MCF 10A (cell line): ENCODE measurements at regions of chr12 and their contacts with region 1.

Region 1: DNA sequence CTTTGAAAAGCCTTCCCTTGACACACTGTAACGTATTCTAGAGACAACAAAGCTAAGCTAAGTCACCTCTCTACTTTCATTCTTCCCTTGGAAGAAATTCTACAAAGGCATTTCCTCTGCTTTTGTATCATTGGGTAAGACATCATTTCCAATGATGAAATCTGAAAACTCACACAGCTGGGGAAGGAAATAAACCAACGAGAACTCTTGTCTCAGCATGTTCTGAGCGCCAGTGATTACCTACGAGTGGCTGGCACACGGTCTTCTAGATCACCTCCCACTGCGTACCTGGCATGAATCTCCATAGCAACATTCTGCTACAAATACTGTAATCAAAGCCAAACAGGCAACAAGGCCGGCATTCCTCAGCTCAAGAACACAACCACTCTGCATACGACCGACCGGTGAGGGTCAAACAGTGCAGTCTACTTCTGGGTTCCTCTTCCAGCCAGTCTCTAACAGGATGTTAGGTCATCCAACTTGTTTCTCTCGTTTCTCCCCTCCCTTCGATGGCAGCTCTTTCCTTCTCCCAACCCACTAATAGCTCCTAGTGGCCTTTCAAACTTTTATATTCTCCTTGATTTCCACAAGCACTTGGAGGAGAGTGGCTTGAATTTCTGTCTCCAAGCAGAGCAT is 7.6 kb downstream of the VPS37B start:
- DNase-seq: peak; percentile 98
- H3K4me3 Mint-ChIP-seq: peak overlapping the region; percentile 56
- H3K27ac Mint-ChIP-seq: peak overlapping the region; percentile 99
- H3K4me1 Mint-ChIP-seq: peaks cover 49% of the 10 kb centered on the region
- H3K27me3 Mint-ChIP-seq: no peaks in the 10 kb centered on the region
- CTCF ChIP-seq: no peak

Region 2: GRCh38 chr12:122834104-122834920 is 54.0 kb before region 1 on chr12:
- CTCF ChIA-PET with region 1: no interaction called
- POLR2A ChIA-PET with region 1: interaction called, 11 read pairs
- intact Hi-C with region 1: no loop called
- DNase-seq: peak; percentile 56
- H3K4me3 Mint-ChIP-seq: peak overlapping the region; percentile 75
- H3K27ac Mint-ChIP-seq: no peak overlapping the region
- H3K4me1 Mint-ChIP-seq: peaks cover 32% of the 10 kb centered on the region
- H3K27me3 Mint-ChIP-seq: no peaks in the 10 kb centered on the region
- CTCF ChIP-seq: no peak

Region 3: DNA sequence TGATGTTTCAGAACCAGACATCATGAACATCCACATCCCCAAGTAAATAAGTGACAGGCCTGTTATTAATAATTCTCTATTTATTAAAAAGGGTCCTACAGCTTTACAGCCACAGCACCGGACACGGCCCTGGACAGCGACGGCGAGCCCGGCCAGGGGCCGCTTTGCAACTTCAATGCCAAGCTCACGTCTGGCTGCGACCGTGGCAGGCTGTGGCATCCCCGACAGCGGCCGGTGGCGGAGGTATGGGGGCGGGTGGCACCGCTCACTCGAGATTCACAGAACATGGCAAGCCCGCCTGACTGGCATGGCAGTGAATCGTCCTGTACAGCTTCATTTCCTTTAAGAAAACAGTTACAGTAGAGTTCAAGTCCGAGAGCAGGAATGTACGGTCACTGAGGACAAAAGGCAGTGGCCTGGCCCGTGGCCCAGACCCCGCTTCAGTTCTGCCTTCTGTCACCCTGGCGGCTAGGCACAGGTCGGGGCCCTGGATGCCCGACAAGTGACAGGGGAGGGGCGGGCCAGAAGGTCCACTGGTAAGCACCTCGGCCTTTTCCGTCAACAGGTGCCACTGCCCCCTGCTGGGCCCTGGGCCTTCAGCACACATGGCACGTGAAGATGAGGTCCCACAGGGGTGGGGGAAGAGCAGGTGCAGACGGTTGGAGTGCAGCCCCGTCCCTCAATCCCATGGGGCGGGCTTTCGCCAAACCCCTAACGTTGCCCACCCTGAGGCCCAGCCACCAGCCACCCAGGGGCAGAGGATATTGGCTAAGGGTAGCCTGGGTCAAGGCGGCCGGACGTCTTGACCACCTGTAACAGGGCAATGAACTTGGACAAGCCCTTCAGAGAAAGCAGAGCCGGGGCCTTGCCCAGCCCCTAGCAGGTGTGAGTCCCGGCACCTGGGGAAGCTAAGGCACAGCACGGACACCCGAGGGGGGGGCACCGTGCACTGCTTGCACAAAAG is 22.8 kb before region 1 on chr12:
- CTCF ChIA-PET with region 1: interaction called, 16 read pairs
- POLR2A ChIA-PET with region 1: interaction called, 53 read pairs
- intact Hi-C with region 1: no loop called
- DNase-seq: no peak
- H3K4me3 Mint-ChIP-seq: no peak overlapping the region
- H3K27ac Mint-ChIP-seq: no peak overlapping the region
- H3K4me1 Mint-ChIP-seq: peaks cover 18% of the 10 kb centered on the region
- H3K27me3 Mint-ChIP-seq: no peaks in the 10 kb centered on the region
- CTCF ChIP-seq: peak; percentile 38

Region 4: DNA sequence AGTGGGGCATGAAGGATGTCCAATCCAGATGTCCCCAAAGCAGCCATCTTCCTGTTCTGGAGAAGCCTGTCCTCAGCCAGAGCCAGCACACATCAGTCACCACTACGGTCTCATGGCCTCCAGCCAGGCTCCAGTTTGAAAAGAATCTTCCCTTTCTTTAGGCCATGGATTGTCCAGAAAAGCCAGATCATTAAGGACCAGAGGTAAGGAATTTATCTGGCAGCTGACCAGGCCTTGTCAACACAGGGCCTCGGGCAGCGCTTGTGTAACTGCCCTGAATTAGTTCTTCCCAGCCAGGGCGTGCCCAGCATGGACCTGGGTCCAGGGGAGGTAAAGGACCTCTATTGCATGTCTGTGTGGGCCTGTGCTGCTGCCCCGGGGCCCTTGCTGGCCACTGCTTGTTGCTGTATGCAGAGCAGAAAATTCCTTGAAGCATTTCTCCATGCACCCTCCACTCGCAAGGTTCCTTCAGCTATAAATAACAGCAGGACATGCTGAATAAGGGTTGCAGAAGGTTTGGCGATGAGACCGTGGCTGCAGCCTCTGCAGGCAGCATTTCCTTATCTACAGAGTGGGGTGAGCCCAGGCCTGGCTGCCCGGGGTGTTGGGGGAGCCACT is 29.3 kb after region 1 on chr12:
- CTCF ChIA-PET with region 1: no interaction called
- POLR2A ChIA-PET with region 1: interaction called, 28 read pairs
- intact Hi-C with region 1: loop called (anchors 2 kb)
- DNase-seq: peak; percentile 96
- H3K4me3 Mint-ChIP-seq: no peak overlapping the region
- H3K27ac Mint-ChIP-seq: no peak overlapping the region
- H3K4me1 Mint-ChIP-seq: peaks cover 26% of the 10 kb centered on the region
- H3K27me3 Mint-ChIP-seq: no peaks in the 10 kb centered on the region
- CTCF ChIP-seq: no peak

Region 5: DNA sequence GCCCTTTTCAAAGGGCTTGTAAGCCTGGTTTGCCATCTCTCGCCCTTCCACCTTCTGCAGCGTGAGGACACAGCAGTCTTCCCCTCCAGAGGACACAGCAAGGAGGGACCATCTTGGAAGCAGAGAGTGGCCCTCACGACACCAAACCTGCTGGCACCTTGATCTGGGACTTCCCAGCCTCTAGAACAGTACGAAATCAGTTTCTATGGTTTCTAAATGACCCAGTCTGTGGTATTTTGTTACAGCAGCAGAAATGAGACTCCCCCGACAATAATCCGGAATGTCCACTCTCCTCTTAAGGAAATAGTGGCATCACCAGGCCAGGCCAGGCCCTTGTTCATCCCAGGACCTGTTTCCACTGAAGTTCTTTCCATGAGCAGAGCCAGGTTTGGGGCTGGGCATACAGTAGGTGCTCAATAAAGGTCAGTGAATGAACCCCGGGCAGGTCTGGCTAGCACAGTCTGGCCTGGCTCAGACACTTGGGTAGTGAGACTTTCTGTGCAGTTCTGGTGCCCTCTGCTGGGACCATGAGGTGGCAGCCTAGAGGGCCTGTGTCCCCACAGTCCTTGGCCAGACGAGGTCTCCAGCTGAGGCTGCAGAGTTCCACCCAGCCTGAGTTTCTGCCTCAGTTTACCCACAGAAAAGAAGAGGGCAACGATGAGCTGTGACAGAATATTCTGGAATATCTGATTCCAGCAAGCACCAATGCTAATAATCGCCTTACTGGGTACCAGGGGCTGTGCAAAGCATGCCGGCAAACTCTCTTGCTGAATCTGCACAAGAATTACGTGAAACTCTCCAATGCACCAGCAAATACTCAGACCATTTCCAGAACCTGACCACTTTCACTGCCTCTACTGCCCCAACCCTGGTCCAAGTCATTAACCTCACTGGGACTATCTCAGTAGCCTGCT is 63.9 kb after region 1 on chr12:
- CTCF ChIA-PET with region 1: interaction called, 13 read pairs
- POLR2A ChIA-PET with region 1: interaction called, 240 read pairs
- intact Hi-C with region 1: no loop called
- DNase-seq: peak; percentile 81
- H3K4me3 Mint-ChIP-seq: no peak overlapping the region
- H3K27ac Mint-ChIP-seq: no peak overlapping the region
- H3K4me1 Mint-ChIP-seq: peaks cover 8% of the 10 kb centered on the region
- H3K27me3 Mint-ChIP-seq: no peaks in the 10 kb centered on the region
- CTCF ChIP-seq: peak; percentile 87

Region 6: GRCh38 chr12:122974274-122974891 is 86.0 kb after region 1 on chr12:
- CTCF ChIA-PET with region 1: no interaction called
- POLR2A ChIA-PET with region 1: interaction called, 22 read pairs
- intact Hi-C with region 1: no loop called
- DNase-seq: peak; percentile 99
- H3K4me3 Mint-ChIP-seq: peak overlapping the region; percentile 94
- H3K27ac Mint-ChIP-seq: peak overlapping the region; percentile 95
- H3K4me1 Mint-ChIP-seq: peaks cover 5% of the 10 kb centered on the region
- H3K27me3 Mint-ChIP-seq: no peaks in the 10 kb centered on the region
- CTCF ChIP-seq: no peak